Mammary epithelial cell (primary cell): ENCODE measurements at regions of chr15 and their contacts with region 1.

Region 1: GRCh38 chr15:54064365-54064764 is 86.1 kb downstream of the UNC13C start:
- DNase-seq: no peak
- H3K4me3 ChIP-seq: no peak overlapping the region
- H3K27ac ChIP-seq: no peak overlapping the region
- H3K4me1 ChIP-seq: no peaks in the 10 kb centered on the region
- H3K27me3 ChIP-seq: no peaks in the 10 kb centered on the region
- CTCF ChIP-seq: no peak

Region 2: DNA sequence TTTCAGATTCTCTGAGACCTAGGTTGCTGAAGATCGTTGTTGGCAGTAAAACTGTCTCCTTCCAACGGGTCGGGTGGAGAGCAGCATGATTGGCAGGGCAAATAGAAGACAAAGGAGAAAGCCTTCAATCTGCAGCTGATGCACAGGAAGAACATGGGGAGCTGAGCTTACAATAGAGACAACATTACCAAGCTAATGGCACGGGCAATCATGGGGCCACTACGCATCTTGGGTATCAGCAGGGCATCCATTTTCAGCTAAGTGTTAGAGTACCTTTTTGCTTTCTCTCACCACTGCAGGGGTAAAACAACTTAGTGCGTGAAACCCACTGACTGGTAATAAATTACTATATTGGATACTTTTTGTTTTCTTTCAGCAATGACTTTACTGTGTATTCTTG is 419.7 kb before region 1 on chr15:
- CTCF ChIA-PET with region 1: no interaction called
- dilution Hi-C with region 1: no loop called
- in situ Hi-C with region 1: no loop called
- intact Hi-C with region 1: no loop called
- DNase-seq: no peak
- H3K4me3 ChIP-seq: no peak overlapping the region
- H3K27ac ChIP-seq: no peak overlapping the region
- H3K4me1 ChIP-seq: no peaks in the 10 kb centered on the region
- H3K27me3 ChIP-seq: peaks cover 2% of the 10 kb centered on the region
- CTCF ChIP-seq: no peak

Region 3: DNA sequence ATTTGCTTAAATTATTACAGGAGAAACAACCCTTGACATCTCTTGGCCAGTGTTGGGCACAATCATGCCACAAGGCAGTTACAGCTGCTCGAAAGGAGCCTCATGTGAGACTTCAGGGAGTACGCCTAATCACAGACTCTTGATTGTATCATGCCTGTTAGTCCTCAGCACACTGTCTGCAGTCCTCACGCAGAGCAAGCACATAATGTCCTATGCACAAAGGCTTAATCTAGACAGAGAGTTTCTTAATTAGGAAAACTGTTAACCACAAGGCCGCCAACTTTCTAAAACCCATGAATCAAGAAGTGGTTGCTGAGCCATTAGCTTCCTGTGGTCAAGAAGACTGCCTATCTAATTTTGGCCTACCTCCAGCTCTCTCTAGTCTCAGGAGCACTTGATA is 85.9 kb after region 1 on chr15:
- CTCF ChIA-PET with region 1: no interaction called
- dilution Hi-C with region 1: loop called (anchors 25 kb)
- in situ Hi-C with region 1: no loop called
- intact Hi-C with region 1: no loop called
- DNase-seq: no peak
- H3K4me3 ChIP-seq: no peak overlapping the region
- H3K27ac ChIP-seq: peak overlapping the region; percentile 76
- H3K4me1 ChIP-seq: no peaks in the 10 kb centered on the region
- H3K27me3 ChIP-seq: no peaks in the 10 kb centered on the region
- CTCF ChIP-seq: no peak